ENCODE measurements at regions of chr19 and their contacts with region 1.

Region 1: GRCh38 chr19:37779127-37780005 is at the start of gene ZNF573:
- DNase-seq: peak; percentile 90
- ATAC-seq: peak; percentile 94
- H3K4me3 Mint-ChIP-seq: peak within 1 kb of the TSS; percentile 95
- H3K27ac Mint-ChIP-seq: peak within 1 kb of the TSS; percentile 96
- H3K4me1 Mint-ChIP-seq: peaks cover 22% of the 10 kb centered on the region
- H3K27me3 Mint-ChIP-seq: no peaks in the 10 kb centered on the region
- total RNA-seq, gene ZNF573: 8.9 to 9.7 TPM

Region 2: GRCh38 chr19:36605101-36605876 is 1174.1 kb before region 1 on chr19 and contains the start of gene ZNF382:
- CTCF ChIA-PET with region 1: no interaction called
- POLR2A ChIA-PET with region 1: interaction called, 10 read pairs
- intact Hi-C with region 1: no loop called
- DNase-seq: peak; percentile 94
- ATAC-seq: peak; percentile 86
- H3K4me3 Mint-ChIP-seq: peak within 1 kb of the TSS; percentile 81
- H3K27ac Mint-ChIP-seq: peak within 1 kb of the TSS; percentile 91
- H3K4me1 Mint-ChIP-seq: peaks cover 20% of the 10 kb centered on the region
- H3K27me3 Mint-ChIP-seq: no peaks in the 10 kb centered on the region
- total RNA-seq, gene ZNF382: 14.9 to 20.0 TPM

Region 3: GRCh38 chr19:37172368-37173366 is 606.7 kb before region 1 on chr19 and contains the start of gene ZNF585A:
- CTCF ChIA-PET with region 1: no interaction called
- POLR2A ChIA-PET with region 1: no interaction called
- intact Hi-C with region 1: loop called in 1 of 2 experiments (anchors 1 kb)
- DNase-seq: peak; percentile 92
- ATAC-seq: peak; percentile 100
- H3K4me3 Mint-ChIP-seq: no peak within 1 kb of the TSS
- H3K27ac Mint-ChIP-seq: no peak within 1 kb of the TSS
- H3K4me1 Mint-ChIP-seq: no peaks in the 10 kb centered on the region
- H3K27me3 Mint-ChIP-seq: no peaks in the 10 kb centered on the region
- total RNA-seq, gene ZNF585A: 8.7 to 9.8 TPM

Region 4: GRCh38 chr19:37334179-37335071 is 444.9 kb before region 1 on chr19:
- CTCF ChIA-PET with region 1: no interaction called
- POLR2A ChIA-PET with region 1: no interaction called
- intact Hi-C with region 1: loop called in 1 of 2 experiments (anchors 5 kb)
- DNase-seq: peak; percentile 93
- ATAC-seq: peak; percentile 99
- H3K4me3 Mint-ChIP-seq: peak overlapping the region; percentile 79
- H3K27ac Mint-ChIP-seq: peak overlapping the region; percentile 70
- H3K4me1 Mint-ChIP-seq: peaks cover 34% of the 10 kb centered on the region
- H3K27me3 Mint-ChIP-seq: no peaks in the 10 kb centered on the region

Region 5: DNA sequence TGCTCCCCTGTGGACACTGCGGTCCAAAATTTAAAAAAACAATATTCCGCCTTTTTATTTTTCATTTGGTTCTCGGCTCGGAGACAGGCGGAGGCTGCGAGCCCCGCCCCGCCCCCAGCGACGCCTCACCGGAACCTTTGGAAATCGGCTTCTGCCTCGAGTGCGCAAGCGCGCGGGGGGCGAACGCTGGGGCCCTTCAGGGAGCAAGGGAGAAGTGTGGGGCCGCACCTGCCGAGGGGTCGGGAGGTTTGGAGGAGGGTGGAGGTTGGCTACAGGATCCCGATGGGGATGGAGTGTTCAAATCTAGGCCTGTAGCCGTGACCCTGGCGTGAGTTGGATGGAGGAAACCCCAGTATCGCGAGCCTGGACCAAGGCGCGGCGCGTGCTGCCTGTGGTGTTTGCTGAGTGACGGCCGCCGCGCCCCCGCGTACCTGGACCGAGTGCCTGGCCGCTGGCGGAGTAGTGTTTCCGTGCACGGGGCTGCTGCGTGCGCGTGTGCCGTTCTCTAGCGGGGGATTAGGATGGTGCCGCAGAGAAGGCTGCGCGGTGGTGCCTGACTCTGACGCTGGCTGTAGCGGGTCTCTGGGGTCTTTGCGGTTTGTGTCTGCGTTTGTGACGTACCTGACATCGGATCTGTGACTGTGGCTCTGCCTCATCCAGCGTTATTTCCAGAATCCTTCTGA is 123.5 kb before region 1 on chr19:
- CTCF ChIA-PET with region 1: no interaction called
- POLR2A ChIA-PET with region 1: no interaction called
- intact Hi-C with region 1: loop called (anchors 1 kb)
- DNase-seq: peak; percentile 93
- ATAC-seq: peak; percentile 79
- H3K4me3 Mint-ChIP-seq: peak overlapping the region; percentile 94
- H3K27ac Mint-ChIP-seq: peak overlapping the region; percentile 99
- H3K4me1 Mint-ChIP-seq: peaks cover 33% of the 10 kb centered on the region
- H3K27me3 Mint-ChIP-seq: no peaks in the 10 kb centered on the region

Region 6: GRCh38 chr19:37763488-37763887 is 15.9 kb before region 1 on chr19:
- CTCF ChIA-PET with region 1: no interaction called
- POLR2A ChIA-PET with region 1: no interaction called
- intact Hi-C with region 1: loop called in 1 of 2 experiments (anchors 1 kb)
- DNase-seq: peak; percentile 38
- ATAC-seq: peak; percentile 91
- H3K4me3 Mint-ChIP-seq: no peak overlapping the region
- H3K27ac Mint-ChIP-seq: no peak overlapping the region
- H3K4me1 Mint-ChIP-seq: peaks cover 4% of the 10 kb centered on the region
- H3K27me3 Mint-ChIP-seq: no peaks in the 10 kb centered on the region

Region 7: GRCh38 chr19:38335949-38336637 is 556.7 kb after region 1 on chr19:
- CTCF ChIA-PET with region 1: no interaction called
- POLR2A ChIA-PET with region 1: no interaction called
- intact Hi-C with region 1: loop called in 1 of 2 experiments (anchors 5 kb)
- DNase-seq: peak; percentile 98
- ATAC-seq: peak; percentile 75
- H3K4me3 Mint-ChIP-seq: peak overlapping the region; percentile 82
- H3K27ac Mint-ChIP-seq: peak overlapping the region; percentile 98
- H3K4me1 Mint-ChIP-seq: peaks cover 12% of the 10 kb centered on the region
- H3K27me3 Mint-ChIP-seq: no peaks in the 10 kb centered on the region